ENCODE measurements at regions of chr17 and their contacts with region 1.

Region 1: GRCh38 chr17:50783193-50783660 is 15.9 kb upstream of the ANKRD40CL start:
- DNase-seq: peak; percentile 91 to 94 (median 93)
- H3K4me3 ChIP-seq: no peak overlapping the region
- H3K27ac ChIP-seq: no peak overlapping the region
- H3K4me1 ChIP-seq: no peaks in the 10 kb centered on the region
- H3K27me3 ChIP-seq: no peaks in the 10 kb centered on the region
- CTCF ChIP-seq: peak; percentile 100

Region 2: DNA sequence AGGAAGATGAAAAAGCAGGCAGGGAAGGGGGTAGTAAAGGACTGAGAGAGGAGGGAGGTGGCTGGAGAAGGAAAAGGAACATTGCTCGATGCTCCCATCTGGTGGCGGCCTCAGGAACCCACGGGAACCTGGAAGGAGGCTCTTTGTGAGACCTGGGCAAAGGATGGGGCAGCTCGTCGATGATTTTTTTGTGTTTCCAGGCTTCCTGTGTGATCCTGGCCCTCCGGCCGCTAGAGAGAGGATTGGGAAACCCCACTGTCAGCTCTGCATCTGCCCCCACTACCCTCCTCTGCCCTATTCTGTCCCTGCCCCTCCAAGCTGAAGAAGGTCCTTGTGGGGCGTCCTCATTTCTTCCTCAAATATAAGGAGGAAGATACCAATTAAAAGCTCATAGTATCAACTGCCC is 58.7 kb after region 1 on chr17:
- intact Hi-C with region 1: loop called (anchors 5 kb)
- DNase-seq: peak in 4 of 5 donors; percentile 82 to 87 (median 84)
- H3K4me3 ChIP-seq: no peak overlapping the region
- H3K27ac ChIP-seq: no peak overlapping the region
- H3K4me1 ChIP-seq: no peaks in the 10 kb centered on the region
- H3K27me3 ChIP-seq: no peaks in the 10 kb centered on the region
- CTCF ChIP-seq: peak; percentile 80

Measured in kidney (tissue), 22 donors.